ENCODE measurements at regions of chrX and their contacts with region 1.

Region 1: GRCh38 chrX:2577844-2578506 is 77.2 kb upstream of the DHRSX start:
- DNase-seq: no peak
- ATAC-seq: no peak
- H3K4me3 ChIP-seq: no peak overlapping the region
- H3K27ac ChIP-seq: no peak overlapping the region
- H3K4me1 ChIP-seq: peaks cover 0 to 2% of the 10 kb centered on the region in 2 experiments; a peak in 1 of 5 replicates
- H3K27me3 ChIP-seq: peaks cover 0 to 14% of the 10 kb centered on the region in 2 experiments; a peak in 3 of 5 replicates
- CTCF ChIP-seq: no peak
- EP300 ChIP-seq: no peak
- POLR2A ChIP-seq: no peak
- RAD21 ChIP-seq: no peak

Region 2: GRCh38 chrX:1883772-1884171 is 694.2 kb before region 1 on chrX:
- CTCF ChIA-PET with region 1: no interaction called
- POLR2A ChIA-PET with region 1: no interaction called
- in situ Hi-C with region 1: loop called (anchors 25 kb)
- intact Hi-C with region 1: no loop called
- DNase-seq: no peak
- ATAC-seq: no peak
- H3K4me3 ChIP-seq: no peak overlapping the region
- H3K27ac ChIP-seq: no peak overlapping the region
- H3K4me1 ChIP-seq: no peaks in the 10 kb centered on the region
- H3K27me3 ChIP-seq: peaks cover 0 to 13% of the 10 kb centered on the region in 2 experiments; a peak in 2 of 5 replicates
- CTCF ChIP-seq: no peak
- EP300 ChIP-seq: no peak
- POLR2A ChIP-seq: no peak
- RAD21 ChIP-seq: no peak

Measured in K562 (cell line).